ENCODE measurements at regions of chr6 and their contacts with region 1.

Region 1: DNA sequence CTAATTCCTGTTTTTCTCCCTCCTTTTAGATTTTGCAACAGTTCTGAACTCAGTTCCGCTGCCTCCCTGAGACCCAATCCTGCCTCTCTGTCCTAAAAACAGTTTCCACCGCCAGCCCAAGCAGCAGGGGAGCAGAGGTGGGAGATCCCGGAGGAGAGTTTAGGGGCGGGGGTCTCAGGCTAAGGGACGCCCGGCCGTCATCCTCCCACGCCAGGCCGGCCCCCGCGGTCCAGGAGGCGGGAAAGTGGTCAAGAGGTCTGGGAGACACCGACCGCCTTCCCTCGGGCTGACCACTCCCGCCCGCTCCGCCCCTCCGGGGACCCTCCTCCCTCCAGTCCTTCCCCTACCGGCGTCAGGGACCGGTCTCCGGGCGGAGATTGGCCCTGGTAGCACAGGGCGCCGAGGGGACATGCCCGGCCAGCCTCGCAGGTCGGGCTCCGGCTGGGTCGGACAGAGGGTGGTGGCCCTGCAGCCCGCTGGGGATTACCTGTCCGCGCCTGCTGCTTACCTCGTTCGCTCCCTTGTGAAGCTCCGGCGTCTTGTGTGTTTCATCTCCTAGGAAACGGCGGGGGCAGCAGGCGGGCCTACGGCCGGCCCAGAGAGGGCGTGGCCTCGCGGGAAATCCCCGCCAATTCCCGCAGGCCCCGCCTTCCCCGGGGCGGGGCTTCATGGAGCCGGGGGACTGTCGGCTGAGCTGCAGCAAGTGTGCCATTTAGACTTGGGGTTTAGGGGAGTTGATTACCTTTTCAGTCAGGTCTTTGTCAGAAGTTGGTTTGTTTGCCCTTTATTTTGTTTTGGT is at the start of gene MAK:
- DNase-seq: peak; percentile 80 to 93 (median 86)
- ATAC-seq: peak; percentile 98
- H3K4me3 ChIP-seq: peak within 1 kb of the TSS; percentile 59
- H3K4me3 Mint-ChIP-seq: peak within 1 kb of the TSS; percentile 71 to 89 (median 78)
- H3K27ac ChIP-seq: no peak within 1 kb of the TSS
- H3K27ac Mint-ChIP-seq: peak within 1 kb of the TSS in 4 of 9 donors; percentile 21 to 87 (median 55)
- H3K4me1 ChIP-seq: peaks cover 14 to 20% of the 10 kb centered on the region in 2 donors
- H3K4me1 Mint-ChIP-seq: peaks cover 10 to 22% (median 19%) of the 10 kb centered on the region in 7 donors
- H3K27me3 ChIP-seq: peaks cover 23 to 29% of the 10 kb centered on the region in 2 donors
- H3K27me3 Mint-ChIP-seq: peaks cover 52 to 65% (median 61%) of the 10 kb centered on the region in 5 donors
- total RNA-seq, gene MAK: 0.34 to 0.42 TPM in 2 of 5 experiments, not detected in the others

Region 2: DNA sequence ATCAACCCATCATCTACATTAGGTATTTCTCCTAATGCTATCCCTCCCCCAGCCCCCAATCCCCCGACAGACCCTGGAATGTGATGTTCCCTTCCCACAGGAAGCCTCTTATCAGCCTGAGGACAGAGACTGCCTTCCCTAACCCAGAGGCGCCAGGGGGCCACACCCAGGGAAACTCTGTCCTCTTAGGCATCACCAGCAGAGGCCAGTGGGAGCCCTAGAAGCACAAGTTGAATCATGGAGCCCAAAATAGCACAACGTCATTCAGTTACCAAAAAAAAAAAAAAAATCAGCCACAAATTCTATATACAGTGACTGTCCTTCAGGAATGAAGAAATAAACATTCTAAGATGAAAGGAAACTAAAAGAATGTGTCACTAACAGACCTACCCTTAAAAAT is 1049.0 kb before region 1 on chr6:
- CTCF ChIA-PET with region 1: no interaction called
- POLR2A ChIA-PET with region 1: no interaction called
- intact Hi-C with region 1: no loop called
- DNase-seq: no peak
- ATAC-seq: no peak
- H3K4me3 ChIP-seq: no peak overlapping the region
- H3K4me3 Mint-ChIP-seq: no peak overlapping the region
- H3K27ac ChIP-seq: no peak overlapping the region
- H3K27ac Mint-ChIP-seq: no peak overlapping the region
- H3K4me1 ChIP-seq: no peaks in the 10 kb centered on the region
- H3K4me1 Mint-ChIP-seq: no peaks in the 10 kb centered on the region
- H3K27me3 ChIP-seq: no peaks in the 10 kb centered on the region
- H3K27me3 Mint-ChIP-seq: peaks cover 0 to 6% (median 0%) of the 10 kb centered on the region in 5 donors

Region 3: DNA sequence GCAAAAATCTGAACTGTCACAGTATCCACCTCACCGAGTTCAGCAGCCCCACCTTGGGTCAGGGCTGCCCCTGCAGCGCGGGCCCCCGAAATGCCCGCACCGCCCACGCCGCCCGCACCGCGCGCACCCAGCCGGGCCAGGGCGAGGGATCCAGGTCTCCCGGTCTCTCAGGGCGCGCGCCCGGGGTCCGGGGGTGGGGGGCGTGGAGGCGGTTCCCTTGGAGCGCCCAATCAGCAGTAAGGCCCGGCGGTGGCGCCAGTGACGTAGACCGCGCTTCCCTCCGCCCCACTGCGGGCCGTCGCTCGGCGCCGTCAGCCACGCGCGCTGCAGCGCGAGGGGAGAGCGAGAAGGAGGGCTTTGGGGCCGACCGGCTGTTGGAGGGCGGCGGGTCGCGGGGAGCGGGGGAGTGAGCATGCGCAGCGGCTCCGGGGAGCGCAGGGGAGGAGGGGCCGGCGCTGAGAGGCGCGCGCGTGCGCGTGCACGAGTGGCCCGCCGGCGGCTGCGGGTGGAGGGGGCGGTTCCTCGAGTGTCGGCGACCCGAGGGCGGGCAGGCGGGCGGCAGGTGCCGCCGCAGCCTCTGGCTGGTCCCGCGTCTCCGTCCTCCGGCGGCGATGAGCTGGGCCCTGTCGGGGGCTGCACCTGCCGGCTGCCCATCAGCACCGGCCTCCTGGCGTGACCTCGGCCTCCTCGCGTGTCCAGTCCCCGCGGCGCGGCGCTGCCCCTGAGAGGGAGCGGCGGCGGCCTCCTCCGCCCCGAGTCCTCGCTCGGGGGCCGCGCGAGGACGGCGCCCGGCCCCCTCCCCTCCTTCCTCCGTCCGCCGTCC is 699.2 kb after region 1 on chr6 and contains the start of gene TMEM170B:
- CTCF ChIA-PET with region 1: no interaction called
- POLR2A ChIA-PET with region 1: no interaction called
- intact Hi-C with region 1: loop called (anchors 5 kb)
- DNase-seq: peak; percentile 94 to 99 (median 98)
- ATAC-seq: peak; percentile 95
- H3K4me3 ChIP-seq: peak within 1 kb of the TSS; percentile 62
- H3K4me3 Mint-ChIP-seq: peak within 1 kb of the TSS; percentile 82 to 90 (median 88)
- H3K27ac ChIP-seq: peak within 1 kb of the TSS; percentile 76
- H3K27ac Mint-ChIP-seq: peak within 1 kb of the TSS in 8 of 9 donors; percentile 67 to 93 (median 83)
- H3K4me1 ChIP-seq: peaks cover 4 to 5% of the 10 kb centered on the region in 2 donors
- H3K4me1 Mint-ChIP-seq: peaks cover 6 to 28% (median 19%) of the 10 kb centered on the region in 7 donors
- H3K27me3 ChIP-seq: no peaks in the 10 kb centered on the region
- H3K27me3 Mint-ChIP-seq: peaks cover 0 to 76% (median 7%) of the 10 kb centered on the region in 5 donors
- total RNA-seq, gene TMEM170B: 0.29 to 12.7 (median 3.4) TPM

Measured in naive thymus-derived CD4-positive, alpha-beta T cell (primary cell).